WTC11 (cell line): ENCODE measurements at regions of chr20 and their contacts with region 1.

Region 1: DNA sequence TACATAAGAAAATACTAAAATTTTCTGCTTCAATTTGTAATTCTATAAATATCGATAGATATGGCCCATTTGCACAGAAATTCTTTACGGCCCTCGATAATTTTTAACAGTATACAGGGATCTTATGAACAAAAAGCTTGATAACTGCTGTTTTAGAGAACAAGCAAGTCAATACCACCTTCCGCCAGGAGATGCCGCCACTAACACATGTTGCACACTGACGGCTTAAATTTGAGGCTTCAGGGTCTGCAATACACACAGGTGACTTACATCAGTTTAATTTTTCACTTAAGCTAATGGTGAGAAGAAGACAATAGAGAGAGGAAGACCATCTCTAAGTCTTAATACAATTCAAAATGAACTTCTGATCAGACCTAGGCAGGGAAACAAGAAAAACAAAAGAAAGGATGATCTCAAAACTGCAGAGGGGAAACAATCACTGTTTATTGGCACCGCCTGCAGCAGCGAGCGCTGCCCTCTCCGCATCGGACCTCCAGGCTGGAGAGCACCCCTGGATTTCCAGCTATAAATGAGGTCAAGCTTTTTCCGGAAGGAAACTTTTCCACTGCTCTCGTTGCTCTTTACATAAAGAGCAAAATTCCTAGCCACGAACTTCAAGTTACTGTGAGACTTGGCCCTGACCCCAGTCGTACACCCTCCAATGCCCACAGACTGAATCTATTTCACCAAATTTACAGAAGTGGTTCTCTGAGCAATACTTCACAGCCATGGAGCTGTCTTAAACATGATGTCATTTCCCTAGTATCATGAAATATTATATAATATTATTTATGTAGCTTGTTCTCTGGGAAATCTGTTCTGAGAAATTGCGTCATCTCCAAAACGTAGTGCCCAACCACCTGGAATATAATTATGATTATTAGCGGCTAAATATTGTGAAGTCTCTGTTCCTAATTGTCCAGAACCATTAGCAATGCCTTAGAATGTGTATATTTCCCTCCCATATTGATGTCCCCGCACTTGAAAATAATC is 54.1 kb downstream of the OTOR start:
- DNase-seq: peak; percentile 86
- ATAC-seq: peak; percentile 65
- H3K4me3 Mint-ChIP-seq: no peak overlapping the region
- H3K27ac Mint-ChIP-seq: no peak overlapping the region
- H3K4me1 Mint-ChIP-seq: peaks cover 8% of the 10 kb centered on the region
- H3K27me3 Mint-ChIP-seq: peaks cover 3% of the 10 kb centered on the region; the same call in 1 of the 2 replicates
- CTCF ChIP-seq: peak; percentile 62

Region 2: DNA sequence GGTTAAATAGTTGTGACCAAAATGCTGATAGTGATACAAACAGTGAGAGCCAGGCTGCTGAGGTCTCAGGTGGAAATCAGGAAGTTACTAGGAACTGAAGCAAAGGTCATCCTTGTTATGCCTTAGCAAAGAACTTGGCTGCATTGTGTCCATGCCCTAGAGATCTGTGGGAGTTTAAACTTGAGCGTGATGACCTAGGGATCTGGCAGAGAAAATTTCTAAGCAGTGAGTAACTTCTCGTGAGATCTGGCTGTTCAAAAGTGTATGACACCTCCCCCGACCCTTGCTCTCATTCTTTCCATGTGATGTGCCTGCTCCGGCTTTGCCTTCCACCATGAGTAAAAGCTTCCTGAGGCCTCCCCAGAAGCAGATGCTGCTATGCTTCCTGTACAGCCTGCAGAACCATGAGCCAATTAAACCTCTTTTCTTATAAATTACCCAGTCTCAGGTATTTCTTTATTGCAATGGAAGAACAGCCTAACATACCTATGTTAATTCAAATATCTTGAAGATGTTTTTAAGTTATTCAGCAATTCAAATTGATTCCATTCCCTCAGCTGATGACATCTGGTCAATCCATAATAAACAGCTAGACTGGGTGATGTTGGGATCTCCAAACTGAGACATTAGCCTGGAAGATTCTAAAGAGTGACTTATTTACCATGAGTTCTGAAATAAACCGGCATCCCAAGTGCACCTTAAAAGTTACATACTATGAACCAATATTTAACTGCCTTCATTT is 262.8 kb before region 1 on chr20:
- CTCF ChIA-PET with region 1: no interaction called
- POLR2A ChIA-PET with region 1: no interaction called
- DNase-seq: no peak
- ATAC-seq: no peak
- H3K4me3 Mint-ChIP-seq: no peak overlapping the region
- H3K27ac Mint-ChIP-seq: no peak overlapping the region
- H3K4me1 Mint-ChIP-seq: peaks cover 18% of the 10 kb centered on the region
- H3K27me3 Mint-ChIP-seq: no peaks in the 10 kb centered on the region
- CTCF ChIP-seq: no peak

Region 3: GRCh38 chr20:16816192-16816591 is 14.0 kb after region 1 on chr20:
- CTCF ChIA-PET with region 1: interaction called, 90 read pairs
- POLR2A ChIA-PET with region 1: no interaction called
- DNase-seq: peak; percentile 47
- ATAC-seq: peak; percentile 98
- H3K4me3 Mint-ChIP-seq: no peak overlapping the region
- H3K27ac Mint-ChIP-seq: no peak overlapping the region
- H3K4me1 Mint-ChIP-seq: no peaks in the 10 kb centered on the region
- H3K27me3 Mint-ChIP-seq: no peaks in the 10 kb centered on the region
- CTCF ChIP-seq: no peak

Region 4: GRCh38 chr20:16821211-16822089 is 19.2 kb after region 1 on chr20:
- CTCF ChIA-PET with region 1: interaction called, 90 read pairs
- POLR2A ChIA-PET with region 1: no interaction called
- DNase-seq: peak; percentile 32
- ATAC-seq: peak; percentile 99
- H3K4me3 Mint-ChIP-seq: no peak overlapping the region
- H3K27ac Mint-ChIP-seq: no peak overlapping the region
- H3K4me1 Mint-ChIP-seq: no peaks in the 10 kb centered on the region
- H3K27me3 Mint-ChIP-seq: no peaks in the 10 kb centered on the region
- CTCF ChIP-seq: peak; percentile 86

Region 5: GRCh38 chr20:17062712-17063111 is 260.5 kb after region 1 on chr20:
- CTCF ChIA-PET with region 1: no interaction called
- POLR2A ChIA-PET with region 1: no interaction called
- DNase-seq: no peak
- ATAC-seq: no peak
- H3K4me3 Mint-ChIP-seq: no peak overlapping the region
- H3K27ac Mint-ChIP-seq: no peak overlapping the region
- H3K4me1 Mint-ChIP-seq: peaks cover 8% of the 10 kb centered on the region
- H3K27me3 Mint-ChIP-seq: no peaks in the 10 kb centered on the region
- CTCF ChIP-seq: no peak

Region 6: GRCh38 chr20:17202673-17203072 is 400.5 kb after region 1 on chr20:
- CTCF ChIA-PET with region 1: interaction called, 11 read pairs
- POLR2A ChIA-PET with region 1: no interaction called
- DNase-seq: peak; percentile 17
- ATAC-seq: peak; percentile 100
- H3K4me3 Mint-ChIP-seq: peak overlapping the region; percentile 31
- H3K27ac Mint-ChIP-seq: no peak overlapping the region
- H3K4me1 Mint-ChIP-seq: peaks cover 12% of the 10 kb centered on the region
- H3K27me3 Mint-ChIP-seq: no peaks in the 10 kb centered on the region; the same call in 1 of the 2 replicates
- CTCF ChIP-seq: no peak

Region 7: DNA sequence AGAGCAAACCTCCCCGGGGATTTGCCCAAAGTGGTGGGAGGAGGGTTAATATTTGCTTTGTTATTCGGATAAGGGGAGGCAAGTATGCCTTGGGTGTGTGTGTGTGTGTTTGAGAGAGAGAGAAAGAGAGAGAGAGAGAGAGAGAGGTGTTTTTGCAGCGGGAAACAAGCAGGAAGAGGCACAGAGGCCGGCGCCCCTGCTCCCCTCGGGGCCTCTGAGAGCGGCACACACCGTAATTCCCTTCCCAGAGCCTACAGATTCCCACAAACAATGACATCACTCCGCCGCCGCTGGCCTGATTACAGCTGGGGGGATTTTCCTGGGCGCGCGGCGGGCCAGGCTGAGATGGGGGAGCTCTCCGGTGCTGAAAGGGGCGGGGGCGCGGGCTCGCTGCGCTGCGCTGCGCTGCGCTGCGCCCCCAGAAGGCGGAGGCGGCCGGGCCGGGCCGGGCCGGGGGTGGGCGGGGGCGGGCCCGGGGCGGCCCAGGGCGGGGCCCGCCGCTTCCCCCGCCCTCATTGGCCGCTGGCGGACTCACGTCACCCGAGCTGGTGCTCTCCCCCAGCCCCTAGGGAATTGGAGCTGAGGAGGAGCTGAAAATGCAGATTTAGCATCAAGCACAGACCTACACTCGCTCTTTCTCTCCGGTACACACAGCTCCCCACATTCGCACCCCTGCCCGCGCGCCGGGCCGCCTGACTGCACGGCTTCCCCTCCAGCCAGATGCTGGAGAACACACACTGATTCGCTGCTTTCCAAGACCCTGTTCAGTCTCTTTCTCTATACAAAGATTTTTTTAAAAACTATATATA is 424.4 kb after region 1 on chr20 and contains the start of gene PCSK2:
- CTCF ChIA-PET with region 1: interaction called, 15 read pairs
- POLR2A ChIA-PET with region 1: no interaction called
- DNase-seq: peak; percentile 90
- ATAC-seq: peak; percentile 88
- H3K4me3 Mint-ChIP-seq: peak within 1 kb of the TSS; percentile 83
- H3K27ac Mint-ChIP-seq: no peak within 1 kb of the TSS
- H3K4me1 Mint-ChIP-seq: peaks cover 31% of the 10 kb centered on the region
- H3K27me3 Mint-ChIP-seq: peaks cover 77% of the 10 kb centered on the region
- CTCF ChIP-seq: no peak
- total RNA-seq, gene PCSK2: 0.74 to 1.1 TPM (median 0.98 TPM) in 3 replicates

Region 8: GRCh38 chr20:17431621-17432364 is 629.6 kb after region 1 on chr20:
- CTCF ChIA-PET with region 1: interaction called, 59 read pairs
- POLR2A ChIA-PET with region 1: no interaction called
- DNase-seq: peak; percentile 72
- ATAC-seq: peak; percentile 79
- H3K4me3 Mint-ChIP-seq: no peak overlapping the region
- H3K27ac Mint-ChIP-seq: no peak overlapping the region
- H3K4me1 Mint-ChIP-seq: peaks cover 25% of the 10 kb centered on the region
- H3K27me3 Mint-ChIP-seq: no peaks in the 10 kb centered on the region
- CTCF ChIP-seq: peak; percentile 93

Region 9: DNA sequence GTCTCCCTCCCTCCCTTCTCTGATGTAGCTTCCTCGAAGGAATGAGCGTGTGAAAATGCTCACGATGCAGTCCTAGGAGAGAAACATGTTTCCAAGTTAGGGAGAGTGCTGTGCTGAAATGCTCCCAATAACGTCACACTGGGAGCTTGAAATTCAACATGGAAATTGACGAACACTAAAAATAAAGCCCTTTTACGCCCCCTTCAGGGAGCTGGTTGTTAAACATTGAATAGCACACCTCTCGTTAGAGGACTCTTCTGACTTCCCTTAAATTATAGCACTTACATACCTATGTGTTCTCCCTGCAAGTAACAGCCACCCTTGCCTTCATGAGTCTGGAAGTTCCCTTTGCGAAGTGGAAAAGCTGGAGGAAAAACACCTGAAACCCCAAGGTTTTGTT is 640.4 kb after region 1 on chr20:
- CTCF ChIA-PET with region 1: interaction called, 23 read pairs
- POLR2A ChIA-PET with region 1: no interaction called
- DNase-seq: peak; percentile 38
- ATAC-seq: peak; percentile 70
- H3K4me3 Mint-ChIP-seq: no peak overlapping the region
- H3K27ac Mint-ChIP-seq: no peak overlapping the region
- H3K4me1 Mint-ChIP-seq: no peaks in the 10 kb centered on the region
- H3K27me3 Mint-ChIP-seq: no peaks in the 10 kb centered on the region
- CTCF ChIP-seq: peak; percentile 37; the same call in 1 of the 2 replicates